Naive thymus-derived CD4-positive, alpha-beta T cell (primary cell): ENCODE measurements at regions of chr1 and their contacts with region 1.

Region 1: GRCh38 chr1:244272471-244273261 is 179.0 kb downstream of the ADSS2 start:
- DNase-seq: peak; percentile 42 to 80 (median 73)
- ATAC-seq: peak; percentile 98
- H3K4me3 ChIP-seq: no peak overlapping the region
- H3K4me3 Mint-ChIP-seq: no peak overlapping the region
- H3K27ac ChIP-seq: no peak overlapping the region
- H3K27ac Mint-ChIP-seq: peak overlapping the region in 3 of 9 donors; percentile 0 to 45 (median 37)
- H3K4me1 ChIP-seq: no peaks in the 10 kb centered on the region
- H3K4me1 Mint-ChIP-seq: peaks cover 3 to 17% (median 12%) of the 10 kb centered on the region in 7 donors
- H3K27me3 ChIP-seq: no peaks in the 10 kb centered on the region
- H3K27me3 Mint-ChIP-seq: peaks cover 0 to 1% (median 0%) of the 10 kb centered on the region in 5 donors

Region 2: GRCh38 chr1:243343970-243344937 is 928.4 kb before region 1 on chr1:
- CTCF ChIA-PET with region 1: interaction called, 26 read pairs
- POLR2A ChIA-PET with region 1: no interaction called
- intact Hi-C with region 1: loop called (anchors 1 kb)
- DNase-seq: peak in 7 of 9 donors; percentile 22 to 65 (median 51)
- ATAC-seq: peak; percentile 64
- H3K4me3 ChIP-seq: no peak overlapping the region
- H3K4me3 Mint-ChIP-seq: no peak overlapping the region
- H3K27ac ChIP-seq: no peak overlapping the region
- H3K27ac Mint-ChIP-seq: no peak overlapping the region
- H3K4me1 ChIP-seq: no peaks in the 10 kb centered on the region
- H3K4me1 Mint-ChIP-seq: peaks cover 0 to 12% (median 3%) of the 10 kb centered on the region in 7 donors
- H3K27me3 ChIP-seq: no peaks in the 10 kb centered on the region
- H3K27me3 Mint-ChIP-seq: no peaks in the 10 kb centered on the region

Region 3: DNA sequence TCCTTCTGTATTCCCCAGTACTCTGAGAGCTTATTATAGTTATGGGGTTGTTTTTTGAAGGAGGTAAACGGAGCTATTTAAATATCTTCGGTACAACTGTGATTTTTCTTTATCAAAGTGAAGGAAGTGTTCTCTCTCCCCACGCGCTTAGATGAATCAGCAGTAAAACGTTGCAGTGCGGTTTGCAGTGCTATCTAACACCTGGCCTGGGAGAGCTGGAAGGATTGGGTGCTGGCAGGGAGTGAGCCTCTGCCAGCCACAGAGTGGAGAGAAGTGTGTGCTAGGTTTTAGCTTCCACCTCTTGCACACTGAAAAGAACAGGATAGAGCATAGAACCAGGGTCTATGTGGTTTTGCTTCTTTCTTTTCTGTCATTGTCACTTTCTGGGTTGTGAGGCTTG is 850.9 kb before region 1 on chr1:
- CTCF ChIA-PET with region 1: no interaction called
- POLR2A ChIA-PET with region 1: no interaction called
- intact Hi-C with region 1: loop called (anchors 5 kb)
- DNase-seq: peak in 8 of 9 donors; percentile 13 to 58 (median 39)
- ATAC-seq: peak; percentile 87
- H3K4me3 ChIP-seq: peak overlapping the region; percentile 6
- H3K4me3 Mint-ChIP-seq: peak overlapping the region; percentile 5 to 80 (median 62)
- H3K27ac ChIP-seq: no peak overlapping the region
- H3K27ac Mint-ChIP-seq: peak overlapping the region in 5 of 9 donors; percentile 1 to 81 (median 17)
- H3K4me1 ChIP-seq: peaks cover 9% of the 10 kb centered on the region in 2 donors
- H3K4me1 Mint-ChIP-seq: peaks cover 12 to 42% (median 22%) of the 10 kb centered on the region in 7 donors
- H3K27me3 ChIP-seq: no peaks in the 10 kb centered on the region
- H3K27me3 Mint-ChIP-seq: no peaks in the 10 kb centered on the region

Region 4: GRCh38 chr1:243596431-243597062 is 676.1 kb before region 1 on chr1:
- CTCF ChIA-PET with region 1: no interaction called
- POLR2A ChIA-PET with region 1: no interaction called
- intact Hi-C with region 1: loop called in 1 of 2 experiments (anchors 10 kb)
- DNase-seq: peak in 1 of 9 donors; percentile 36
- ATAC-seq: peak; percentile 81
- H3K4me3 ChIP-seq: no peak overlapping the region
- H3K4me3 Mint-ChIP-seq: peak overlapping the region in 4 of 10 donors; percentile 6 to 73 (median 44)
- H3K27ac ChIP-seq: no peak overlapping the region
- H3K27ac Mint-ChIP-seq: peak overlapping the region in 5 of 9 donors; percentile 28 to 89 (median 40)
- H3K4me1 ChIP-seq: peaks cover 4 to 19% of the 10 kb centered on the region in 2 donors
- H3K4me1 Mint-ChIP-seq: peaks cover 23 to 48% (median 32%) of the 10 kb centered on the region in 7 donors
- H3K27me3 ChIP-seq: no peaks in the 10 kb centered on the region
- H3K27me3 Mint-ChIP-seq: no peaks in the 10 kb centered on the region

Region 5: DNA sequence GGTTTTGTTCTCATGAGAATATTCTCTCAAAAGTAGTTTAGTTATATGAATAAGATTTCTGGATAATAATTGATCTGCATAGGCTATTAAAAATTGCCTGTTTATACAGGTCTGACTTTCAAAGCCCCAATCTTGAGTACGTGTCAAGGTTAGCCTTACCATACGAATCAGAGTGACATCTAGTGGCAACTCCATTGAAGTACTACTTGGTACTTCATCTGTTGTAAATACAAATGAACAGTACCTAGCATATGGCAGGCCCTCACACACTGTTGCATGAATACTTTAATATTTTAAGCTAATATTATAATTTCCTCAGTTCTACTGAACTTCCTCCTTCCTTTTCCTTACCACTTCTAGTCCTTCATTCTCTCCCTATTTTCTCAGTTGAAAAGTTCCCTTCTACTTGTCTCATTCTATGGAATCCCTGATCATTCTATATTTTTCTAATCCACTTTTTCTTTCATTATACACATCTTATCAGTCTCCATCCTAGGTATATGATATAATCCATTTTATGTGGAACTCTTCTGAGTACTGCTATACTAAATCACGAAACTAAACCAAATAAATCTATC is 523.9 kb before region 1 on chr1:
- CTCF ChIA-PET with region 1: no interaction called
- POLR2A ChIA-PET with region 1: no interaction called
- intact Hi-C with region 1: loop called (anchors 1 kb)
- DNase-seq: peak in 7 of 9 donors; percentile 11 to 59 (median 44)
- ATAC-seq: peak; percentile 99
- H3K4me3 ChIP-seq: no peak overlapping the region
- H3K4me3 Mint-ChIP-seq: no peak overlapping the region
- H3K27ac ChIP-seq: no peak overlapping the region
- H3K27ac Mint-ChIP-seq: peak overlapping the region in 6 of 9 donors; percentile 23 to 84 (median 71)
- H3K4me1 ChIP-seq: peaks cover 0 to 12% of the 10 kb centered on the region in 2 donors
- H3K4me1 Mint-ChIP-seq: peaks cover 2 to 68% (median 39%) of the 10 kb centered on the region in 7 donors
- H3K27me3 ChIP-seq: no peaks in the 10 kb centered on the region
- H3K27me3 Mint-ChIP-seq: no peaks in the 10 kb centered on the region

Region 6: GRCh38 chr1:244021947-244022700 is 250.5 kb before region 1 on chr1:
- CTCF ChIA-PET with region 1: no interaction called
- POLR2A ChIA-PET with region 1: no interaction called
- intact Hi-C with region 1: loop called in 1 of 2 experiments (anchors 1 kb)
- DNase-seq: no peak
- ATAC-seq: no peak
- H3K4me3 ChIP-seq: no peak overlapping the region
- H3K4me3 Mint-ChIP-seq: no peak overlapping the region
- H3K27ac ChIP-seq: no peak overlapping the region
- H3K27ac Mint-ChIP-seq: no peak overlapping the region
- H3K4me1 ChIP-seq: no peaks in the 10 kb centered on the region
- H3K4me1 Mint-ChIP-seq: peaks cover 0 to 4% (median 0%) of the 10 kb centered on the region in 7 donors
- H3K27me3 ChIP-seq: no peaks in the 10 kb centered on the region
- H3K27me3 Mint-ChIP-seq: peaks cover 0 to 15% (median 8%) of the 10 kb centered on the region in 5 donors

Region 7: DNA sequence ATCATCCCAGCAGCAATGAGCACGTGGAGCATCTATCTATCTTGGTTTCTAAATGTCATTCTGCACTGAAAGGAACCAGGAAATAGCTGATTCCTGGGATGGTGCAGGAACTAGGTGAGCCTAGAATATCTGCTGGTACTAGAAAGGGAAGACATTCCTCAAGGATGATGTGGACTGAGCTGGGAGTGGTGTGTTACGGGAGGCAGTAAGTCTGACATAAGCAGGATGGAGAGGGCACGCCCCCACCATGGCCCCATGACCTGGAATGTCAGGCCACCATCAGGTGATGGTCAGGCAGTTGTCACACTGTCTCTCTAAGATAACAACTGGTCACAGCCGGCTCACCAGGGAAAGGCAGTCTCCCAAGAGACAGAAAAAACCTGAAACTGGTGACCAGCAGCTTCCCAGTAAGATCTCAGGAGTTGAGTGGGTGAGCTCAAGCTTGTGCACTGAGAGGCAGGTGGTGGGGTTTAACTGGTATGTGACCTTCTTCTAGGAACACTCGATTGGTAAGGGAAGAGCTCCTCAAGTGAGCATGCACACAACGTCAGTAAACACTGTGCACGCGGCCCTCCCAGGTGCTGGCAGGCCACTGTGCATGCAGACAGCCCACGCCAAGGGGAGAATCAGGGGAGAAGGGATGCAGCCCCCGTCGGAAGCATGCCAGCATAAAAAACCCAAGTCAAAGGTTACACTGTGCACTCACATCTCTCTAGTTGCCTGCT is 30.4 kb after region 1 on chr1:
- CTCF ChIA-PET with region 1: no interaction called
- POLR2A ChIA-PET with region 1: no interaction called
- intact Hi-C with region 1: loop called (anchors 1 kb)
- DNase-seq: no peak
- ATAC-seq: no peak
- H3K4me3 ChIP-seq: no peak overlapping the region
- H3K4me3 Mint-ChIP-seq: no peak overlapping the region
- H3K27ac ChIP-seq: no peak overlapping the region
- H3K27ac Mint-ChIP-seq: peak overlapping the region in 3 of 9 donors; percentile 4 to 43 (median 7)
- H3K4me1 ChIP-seq: peaks cover 0 to 3% of the 10 kb centered on the region in 2 donors
- H3K4me1 Mint-ChIP-seq: peaks cover 5 to 13% (median 7%) of the 10 kb centered on the region in 7 donors
- H3K27me3 ChIP-seq: no peaks in the 10 kb centered on the region
- H3K27me3 Mint-ChIP-seq: peaks cover 0 to 2% (median 0%) of the 10 kb centered on the region in 5 donors

Region 8: GRCh38 chr1:244341455-244342450 is 69.1 kb after region 1 on chr1:
- CTCF ChIA-PET with region 1: no interaction called
- POLR2A ChIA-PET with region 1: no interaction called
- intact Hi-C with region 1: no loop called
- DNase-seq: no peak
- ATAC-seq: peak; percentile 67
- H3K4me3 ChIP-seq: no peak overlapping the region
- H3K4me3 Mint-ChIP-seq: peak overlapping the region in 1 of 10 donors; percentile 73
- H3K27ac ChIP-seq: no peak overlapping the region
- H3K27ac Mint-ChIP-seq: peak overlapping the region in 1 of 9 donors; percentile 90
- H3K4me1 ChIP-seq: no peaks in the 10 kb centered on the region
- H3K4me1 Mint-ChIP-seq: peaks cover 0 to 44% (median 4%) of the 10 kb centered on the region in 7 donors
- H3K27me3 ChIP-seq: no peaks in the 10 kb centered on the region
- H3K27me3 Mint-ChIP-seq: peaks cover 0 to 6% (median 5%) of the 10 kb centered on the region in 5 donors